ENCODE measurements at regions of chr14 and their contacts with region 1.

Region 1: GRCh38 chr14:37610945-37611523 is 15.6 kb downstream of the TTC6 start:
- DNase-seq: no peak
- ATAC-seq: no peak
- H3K4me3 ChIP-seq: no peak overlapping the region
- H3K27ac ChIP-seq: no peak overlapping the region
- H3K4me1 ChIP-seq: peaks cover 20% of the 10 kb centered on the region
- H3K27me3 ChIP-seq: no peaks in the 10 kb centered on the region
- CTCF ChIP-seq: no peak
- EP300 ChIP-seq: no peak
- POLR2A ChIP-seq: no peak
- RAD21 ChIP-seq: no peak

Region 2: DNA sequence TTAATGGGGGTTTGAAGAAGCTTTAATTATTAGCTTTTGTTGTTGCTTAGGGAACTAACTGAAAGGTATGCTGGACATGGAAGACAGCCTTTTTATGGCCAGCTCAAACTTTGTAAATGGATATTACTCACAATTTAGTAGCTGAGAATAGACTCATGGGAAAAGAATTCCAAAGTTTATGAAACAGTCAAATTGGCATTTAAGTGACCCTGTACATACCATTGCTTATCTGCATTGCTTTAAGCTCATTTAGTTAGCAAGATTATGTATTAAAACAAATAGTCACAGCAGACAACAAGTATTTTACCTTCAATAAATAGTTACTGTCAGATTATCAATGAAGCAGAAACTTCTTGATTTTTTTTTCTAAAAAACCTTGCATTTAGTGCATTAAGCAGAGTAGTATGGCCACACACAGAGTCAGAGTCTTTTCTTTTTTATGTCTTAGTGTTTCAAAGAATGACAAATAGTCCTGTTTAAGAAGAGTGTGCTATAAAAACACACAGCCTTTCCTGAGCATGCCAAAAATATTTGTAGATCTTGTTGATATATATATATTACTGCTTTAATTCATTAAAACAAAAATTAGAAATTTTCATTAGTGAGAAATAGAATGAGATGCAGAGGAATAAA is 86.6 kb after region 1 on chr14:
- CTCF ChIA-PET with region 1: no interaction called
- POLR2A ChIA-PET with region 1: no interaction called
- in situ Hi-C with region 1: no loop called
- intact Hi-C with region 1: loop called (anchors 5 kb)
- DNase-seq: peak; percentile 96
- ATAC-seq: peak; percentile 85
- H3K4me3 ChIP-seq: no peak overlapping the region; a peak in 1 of 6 replicates
- H3K27ac ChIP-seq: peak overlapping the region; percentile 46
- H3K4me1 ChIP-seq: peaks cover 34% of the 10 kb centered on the region
- H3K27me3 ChIP-seq: no peaks in the 10 kb centered on the region
- CTCF ChIP-seq: no peak
- EP300 ChIP-seq: peak in 1 of 2 experiments; percentile 82; a peak in 2 of 4 replicates
- POLR2A ChIP-seq: no peak
- RAD21 ChIP-seq: no peak

Measured in HepG2 (cell line).